ENCODE measurements at regions of chr20 and their contacts with region 1.

Region 1: DNA sequence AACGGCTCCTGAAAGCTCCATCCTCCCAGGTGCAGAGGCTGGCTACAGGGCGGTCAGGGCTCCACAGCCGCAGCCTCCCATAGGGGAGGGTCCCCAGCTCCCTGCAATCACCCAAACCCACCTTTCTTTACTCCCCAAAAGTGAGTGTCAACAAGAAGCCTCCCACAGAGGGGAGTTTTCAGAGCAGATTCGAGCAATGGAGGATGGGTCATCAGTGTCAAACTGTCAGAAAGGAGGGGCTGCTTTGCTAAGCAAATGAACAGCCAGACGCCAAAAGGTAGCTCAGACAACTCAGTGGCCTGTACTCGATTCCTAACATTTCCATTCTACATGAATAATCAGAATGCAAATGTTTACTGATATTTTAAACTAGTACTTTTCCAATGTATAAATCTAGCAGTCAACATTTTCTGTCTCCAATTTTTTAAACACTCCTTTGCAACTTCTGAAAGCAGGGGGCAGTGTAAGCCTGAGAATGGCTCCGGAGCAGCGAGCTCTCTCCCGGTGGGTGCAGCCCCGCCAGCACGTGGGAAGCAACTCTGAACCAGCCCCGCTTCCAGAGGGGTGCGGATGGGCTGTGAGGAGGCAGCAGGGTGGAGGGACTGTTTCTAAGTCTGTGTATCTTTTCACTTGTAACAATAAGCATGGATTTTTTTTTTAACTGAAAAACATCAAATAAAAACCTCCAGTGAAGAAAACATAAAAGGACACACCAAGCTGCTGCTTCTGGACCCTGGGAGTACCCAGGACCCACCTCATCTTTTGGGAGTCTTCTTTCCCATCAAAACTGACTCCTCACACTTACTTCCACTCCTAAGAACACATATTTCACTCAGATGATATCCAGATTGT is 54.9 kb downstream of the TAF4 start:
- DNase-seq: peak; percentile 59
- H3K4me3 ChIP-seq: no peak overlapping the region
- H3K27ac ChIP-seq: no peak overlapping the region
- H3K4me1 ChIP-seq: no peaks in the 10 kb centered on the region
- H3K27me3 ChIP-seq: no peaks in the 10 kb centered on the region
- CTCF ChIP-seq: peak; percentile 46 to 58
- POLR2A ChIP-seq: no peak

Region 2: GRCh38 chr20:62065669-62066338 is 55.0 kb after region 1 on chr20 and contains the start of gene TAF4:
- CTCF ChIA-PET with region 1: interaction called, 5 read pairs
- POLR2A ChIA-PET with region 1: no interaction called
- dilution Hi-C with region 1: no loop called
- intact Hi-C with region 1: loop called (anchors 5 kb)
- DNase-seq: peak; percentile 58
- H3K4me3 ChIP-seq: peak within 1 kb of the TSS; percentile 25 to 55 (median 53)
- H3K27ac ChIP-seq: peak within 1 kb of the TSS; percentile 47
- H3K4me1 ChIP-seq: peaks cover 16% of the 10 kb centered on the region
- H3K27me3 ChIP-seq: no peaks in the 10 kb centered on the region
- CTCF ChIP-seq: no peak
- POLR2A ChIP-seq: peak; percentile 97
- total RNA-seq, gene TAF4: 15.2 and 19.5 TPM in 2 replicates

Region 3: DNA sequence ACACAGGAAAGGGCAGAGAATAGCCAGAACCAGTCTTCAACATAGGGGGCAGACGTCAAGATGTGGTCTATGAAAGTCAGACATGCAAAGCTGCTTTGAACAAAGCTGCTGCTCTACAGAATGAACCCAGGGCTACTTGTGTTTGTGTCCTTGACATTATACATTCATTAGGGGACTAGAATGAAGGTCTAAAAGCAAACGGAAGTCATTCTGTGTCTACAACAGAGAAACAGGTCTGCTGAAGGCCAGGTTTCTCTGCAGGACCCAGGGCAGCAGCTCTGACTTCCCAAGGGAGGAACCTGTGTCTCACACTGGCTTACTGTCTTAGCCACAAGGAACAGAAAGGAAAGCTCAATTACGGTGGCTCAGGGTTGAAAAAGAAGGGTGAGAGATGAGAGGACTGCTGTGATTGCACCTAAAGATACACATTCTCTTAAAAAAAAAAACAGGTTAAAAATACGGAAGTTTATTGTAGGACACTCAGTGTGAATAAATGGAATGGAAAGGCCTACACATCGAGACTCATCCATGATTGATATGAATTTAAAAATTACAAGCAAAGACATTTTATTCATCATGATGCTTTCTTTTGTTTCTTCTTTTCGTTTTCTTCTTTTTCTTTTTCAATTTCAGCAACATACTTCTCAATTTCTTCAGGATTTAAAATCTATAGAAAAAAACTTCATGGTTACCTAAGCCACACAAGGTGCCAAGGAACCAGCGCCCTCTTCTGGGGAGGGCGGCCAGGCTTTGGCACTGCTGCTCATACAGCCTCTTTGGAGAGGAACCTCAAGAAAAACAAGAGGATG is 125.7 kb after region 1 on chr20:
- CTCF ChIA-PET with region 1: interaction called, 75 read pairs
- POLR2A ChIA-PET with region 1: no interaction called
- dilution Hi-C with region 1: no loop called
- intact Hi-C with region 1: loop called (anchors 1 kb)
- DNase-seq: peak; percentile 84
- H3K4me3 ChIP-seq: no peak overlapping the region
- H3K27ac ChIP-seq: no peak overlapping the region
- H3K4me1 ChIP-seq: no peaks in the 10 kb centered on the region
- H3K27me3 ChIP-seq: no peaks in the 10 kb centered on the region
- CTCF ChIP-seq: peak; percentile 81
- POLR2A ChIP-seq: no peak

Region 4: GRCh38 chr20:62156592-62157386 is 146.0 kb after region 1 on chr20:
- CTCF ChIA-PET with region 1: interaction called, 21 read pairs
- POLR2A ChIA-PET with region 1: no interaction called
- dilution Hi-C with region 1: no loop called
- intact Hi-C with region 1: loop called (anchors 1 kb)
- DNase-seq: peak; percentile 48
- H3K4me3 ChIP-seq: no peak overlapping the region
- H3K27ac ChIP-seq: no peak overlapping the region
- H3K4me1 ChIP-seq: no peaks in the 10 kb centered on the region
- H3K27me3 ChIP-seq: no peaks in the 10 kb centered on the region
- CTCF ChIP-seq: peak; percentile 69 to 92
- POLR2A ChIP-seq: no peak

Region 5: GRCh38 chr20:62285722-62286121 is 274.9 kb after region 1 on chr20:
- CTCF ChIA-PET with region 1: interaction called, 10 read pairs
- POLR2A ChIA-PET with region 1: no interaction called
- dilution Hi-C with region 1: no loop called
- intact Hi-C with region 1: no loop called
- DNase-seq: peak; percentile 98
- H3K4me3 ChIP-seq: no peak overlapping the region
- H3K27ac ChIP-seq: peak overlapping the region; percentile 91
- H3K4me1 ChIP-seq: peaks cover 19% of the 10 kb centered on the region
- H3K27me3 ChIP-seq: no peaks in the 10 kb centered on the region
- CTCF ChIP-seq: no peak
- POLR2A ChIP-seq: peak; percentile 89